Motor neuron (in vitro differentiated cells): ENCODE measurements at regions of chr17 and their contacts with region 1.

Region 1: DNA sequence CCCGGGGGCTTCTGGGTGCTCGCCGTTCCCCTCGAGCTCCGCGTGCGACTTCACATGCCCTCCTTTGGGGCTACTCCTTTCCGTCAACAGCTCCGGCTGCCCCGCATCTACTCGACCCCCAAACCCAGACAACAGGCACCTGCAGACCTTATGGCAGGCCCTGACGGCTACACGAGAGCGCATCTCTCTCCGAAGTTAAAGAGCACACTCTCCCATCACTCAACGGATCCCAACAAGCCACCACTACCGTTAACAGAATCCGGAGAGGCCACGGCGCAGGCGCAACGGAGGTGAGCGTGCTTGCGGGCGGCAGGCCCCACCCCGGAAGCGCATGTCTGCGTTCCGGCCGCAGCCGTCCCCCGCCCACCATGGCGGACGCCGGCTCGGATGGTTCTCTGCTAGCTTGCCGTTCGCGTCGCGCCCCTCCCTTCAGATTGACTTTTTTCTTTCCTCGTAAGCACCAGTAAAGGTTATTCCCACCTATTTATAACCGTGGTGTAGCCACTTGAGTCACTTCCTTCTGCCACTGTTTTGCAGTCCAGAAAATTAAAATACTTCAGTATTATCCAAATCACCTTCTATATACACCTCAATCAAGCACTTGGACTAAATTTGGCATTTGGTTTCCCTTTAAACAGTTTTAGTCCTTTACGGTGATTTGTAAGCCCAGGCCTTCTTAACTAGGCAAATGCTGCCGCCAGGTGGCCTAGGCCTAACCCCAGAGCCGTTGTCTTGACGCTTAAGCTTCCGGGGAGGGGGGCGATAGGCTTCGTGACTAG is at the start of gene POLG2:
- ATAC-seq: peak; percentile 52 to 91 (median 87)
- H3K4me3 ChIP-seq: peak within 1 kb of the TSS; percentile 47 to 73 (median 64)
- H3K27ac ChIP-seq: peak within 1 kb of the TSS; percentile 77 to 89
- H3K4me1 ChIP-seq: peaks cover 13 to 42% of the 10 kb centered on the region in 2 donors
- total RNA-seq, gene POLG2: 10.8 to 33.2 (median 14.5) TPM

Region 2: DNA sequence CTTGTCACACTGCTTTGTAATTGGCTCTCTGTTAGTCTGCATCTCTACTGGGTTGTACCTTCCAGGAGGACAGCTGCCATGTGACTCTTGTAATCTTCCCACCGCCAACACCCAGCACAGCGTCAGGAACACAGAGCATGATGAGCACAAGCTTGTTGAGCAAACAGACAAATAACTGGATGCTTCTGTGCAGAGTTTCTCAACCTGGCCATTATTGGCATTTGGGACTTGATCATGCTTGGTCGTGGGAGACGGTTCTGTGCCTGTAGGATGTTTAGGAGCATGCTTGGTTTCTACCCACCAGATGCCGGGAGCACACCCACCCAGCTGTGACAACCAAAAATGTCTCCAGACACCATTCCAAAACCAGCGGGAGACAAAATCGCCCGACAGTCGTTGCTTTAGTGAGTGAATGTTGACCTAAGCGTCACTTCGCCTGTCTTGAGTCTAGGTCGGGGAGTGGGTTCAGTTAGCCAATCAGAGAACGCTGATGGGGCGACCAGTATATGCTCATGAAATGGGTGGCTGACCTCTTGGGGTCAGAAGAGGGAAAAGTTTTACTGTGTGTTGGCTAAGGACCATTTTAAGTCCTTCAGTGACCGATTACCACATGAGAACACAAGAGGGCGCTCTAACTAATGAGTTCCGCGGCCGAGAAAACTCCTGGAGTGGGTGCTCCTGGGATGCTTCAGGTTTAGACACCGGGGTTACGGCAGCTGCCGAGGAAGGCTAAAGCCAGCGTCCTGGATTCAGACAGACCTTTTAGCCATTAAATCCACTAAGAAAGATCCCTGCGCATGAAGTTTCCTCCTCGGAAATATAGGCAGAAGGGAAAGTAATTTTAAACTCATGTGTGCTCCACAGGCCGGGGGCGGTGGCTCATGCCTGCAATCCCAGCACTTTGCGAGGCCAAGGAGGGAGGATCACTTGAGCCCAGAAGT is 176.1 kb before region 1 on chr17:
- in situ Hi-C with region 1: loop called in 1 of 9 experiments (anchors 25 kb)
- ATAC-seq: peak in 7 of 8 experiments; percentile 49 to 96 (median 65)
- H3K4me3 ChIP-seq: no peak overlapping the region
- H3K27ac ChIP-seq: no peak overlapping the region
- H3K4me1 ChIP-seq: no peaks in the 10 kb centered on the region